ENCODE measurements at regions of chr9 and their contacts with region 1.

Region 1: DNA sequence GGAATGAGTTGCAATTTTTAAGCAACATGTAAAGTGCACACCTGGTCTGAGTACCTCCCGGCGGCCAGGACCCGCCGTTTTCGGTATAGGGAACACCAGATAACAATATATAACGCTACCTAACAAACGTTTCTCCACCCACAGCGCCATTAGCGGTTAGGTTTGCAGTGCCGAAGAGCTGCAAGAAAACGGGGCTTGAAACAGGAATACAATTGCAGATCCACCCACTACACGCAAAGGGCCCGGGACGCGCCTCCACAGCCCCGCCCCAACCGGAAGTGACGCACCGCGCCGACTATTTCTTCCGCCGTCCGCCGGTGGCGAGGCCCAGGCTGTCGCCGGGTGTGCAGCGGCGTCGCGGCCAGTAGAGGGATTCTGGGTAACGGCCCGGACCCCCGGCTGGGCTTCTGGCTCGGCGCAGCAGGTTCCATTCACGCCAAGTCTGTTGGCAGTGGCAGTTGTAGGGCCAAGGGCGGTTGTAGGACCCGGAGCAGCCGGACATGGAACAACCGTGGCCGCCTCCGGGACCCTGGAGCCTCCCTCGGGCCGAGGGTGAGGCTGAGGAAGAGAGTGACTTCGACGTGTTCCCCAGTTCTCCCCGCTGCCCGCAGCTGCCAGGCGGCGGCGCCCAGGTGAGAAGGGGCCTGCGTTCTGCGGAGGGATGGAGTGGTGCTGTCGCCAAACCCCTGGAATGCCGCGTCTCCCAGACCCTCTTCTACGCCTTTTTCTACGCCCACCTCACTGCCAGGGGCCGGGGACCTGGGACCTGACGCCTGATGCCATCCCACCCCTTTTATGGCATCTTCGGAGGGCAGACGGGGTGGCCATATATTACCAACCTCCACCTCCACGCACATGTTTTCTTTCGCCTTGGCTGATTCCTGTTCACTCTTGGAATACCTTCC is at the start of gene CDC37L1:
- DNase-seq: peak; percentile 98 to 100 (median 99)
- ATAC-seq: peak; percentile 98
- H3K4me3 ChIP-seq: peak within 1 kb of the TSS; percentile 72
- H3K4me3 Mint-ChIP-seq: no peak within 1 kb of the TSS
- H3K27ac ChIP-seq: peak within 1 kb of the TSS; percentile 95
- H3K27ac Mint-ChIP-seq: no peak within 1 kb of the TSS
- H3K4me1 ChIP-seq: peaks cover 15 to 19% of the 10 kb centered on the region in 2 donors
- H3K4me1 Mint-ChIP-seq: peaks cover 9 to 19% (median 17%) of the 10 kb centered on the region in 7 donors
- H3K27me3 ChIP-seq: no peaks in the 10 kb centered on the region
- H3K27me3 Mint-ChIP-seq: no peaks in the 10 kb centered on the region
- total RNA-seq, gene CDC37L1: 13.4 to 28.0 (median 22.9) TPM

Region 2: GRCh38 chr9:2849941-2850340 is 1829.6 kb before region 1 on chr9:
- CTCF ChIA-PET with region 1: no interaction called
- POLR2A ChIA-PET with region 1: no interaction called
- intact Hi-C with region 1: loop called in 1 of 2 experiments (anchors 2 kb)
- DNase-seq: peak in 3 of 9 donors; percentile 22 to 34 (median 29)
- ATAC-seq: peak; percentile 79
- H3K4me3 ChIP-seq: no peak overlapping the region
- H3K4me3 Mint-ChIP-seq: no peak overlapping the region
- H3K27ac ChIP-seq: no peak overlapping the region
- H3K27ac Mint-ChIP-seq: peak overlapping the region in 4 of 9 donors; percentile 17 to 82 (median 42)
- H3K4me1 ChIP-seq: peaks cover 5% of the 10 kb centered on the region in 2 donors
- H3K4me1 Mint-ChIP-seq: peaks cover 5 to 16% (median 9%) of the 10 kb centered on the region in 7 donors
- H3K27me3 ChIP-seq: no peaks in the 10 kb centered on the region
- H3K27me3 Mint-ChIP-seq: peaks cover 1 to 17% (median 13%) of the 10 kb centered on the region in 5 donors

Region 3: GRCh38 chr9:4443439-4443838 is 236.1 kb before region 1 on chr9:
- CTCF ChIA-PET with region 1: no interaction called
- POLR2A ChIA-PET with region 1: no interaction called
- intact Hi-C with region 1: no loop called
- DNase-seq: peak in 1 of 9 donors; percentile 18
- ATAC-seq: no peak
- H3K4me3 ChIP-seq: no peak overlapping the region
- H3K4me3 Mint-ChIP-seq: no peak overlapping the region
- H3K27ac ChIP-seq: no peak overlapping the region
- H3K27ac Mint-ChIP-seq: peak overlapping the region in 2 of 9 donors; percentile 3 to 22
- H3K4me1 ChIP-seq: no peaks in the 10 kb centered on the region
- H3K4me1 Mint-ChIP-seq: peaks cover 0 to 16% (median 11%) of the 10 kb centered on the region in 7 donors
- H3K27me3 ChIP-seq: no peaks in the 10 kb centered on the region
- H3K27me3 Mint-ChIP-seq: peaks cover 0 to 20% (median 7%) of the 10 kb centered on the region in 5 donors

Region 4: GRCh38 chr9:4604678-4605095 is 74.8 kb before region 1 on chr9:
- CTCF ChIA-PET with region 1: no interaction called
- POLR2A ChIA-PET with region 1: interaction called, 4 read pairs
- intact Hi-C with region 1: loop called in 1 of 2 experiments (anchors 2 kb)
- DNase-seq: peak in 8 of 9 donors; percentile 38 to 77 (median 60)
- ATAC-seq: peak; percentile 88
- H3K4me3 ChIP-seq: peak overlapping the region; percentile 18
- H3K4me3 Mint-ChIP-seq: peak overlapping the region in 3 of 10 donors; percentile 40 to 53 (median 50)
- H3K27ac ChIP-seq: no peak overlapping the region
- H3K27ac Mint-ChIP-seq: peak overlapping the region in 6 of 9 donors; percentile 17 to 85 (median 82)
- H3K4me1 ChIP-seq: peaks cover 16 to 29% of the 10 kb centered on the region in 2 donors
- H3K4me1 Mint-ChIP-seq: peaks cover 12 to 52% (median 32%) of the 10 kb centered on the region in 7 donors
- H3K27me3 ChIP-seq: no peaks in the 10 kb centered on the region
- H3K27me3 Mint-ChIP-seq: no peaks in the 10 kb centered on the region

Region 5: GRCh38 chr9:4667681-4668080 is 11.8 kb before region 1 on chr9:
- CTCF ChIA-PET with region 1: interaction called, 6 read pairs
- POLR2A ChIA-PET with region 1: interaction called, 120 read pairs
- intact Hi-C with region 1: loop called (anchors 1 kb)
- DNase-seq: peak in 7 of 9 donors; percentile 51 to 80 (median 73)
- ATAC-seq: peak; percentile 72
- H3K4me3 ChIP-seq: no peak overlapping the region
- H3K4me3 Mint-ChIP-seq: peak overlapping the region in 8 of 10 donors; percentile 33 to 98 (median 76)
- H3K27ac ChIP-seq: peak overlapping the region; percentile 35
- H3K27ac Mint-ChIP-seq: peak overlapping the region in 8 of 9 donors; percentile 84 to 96 (median 94)
- H3K4me1 ChIP-seq: peaks cover 17 to 53% of the 10 kb centered on the region in 2 donors
- H3K4me1 Mint-ChIP-seq: peaks cover 45 to 77% (median 68%) of the 10 kb centered on the region in 7 donors
- H3K27me3 ChIP-seq: no peaks in the 10 kb centered on the region
- H3K27me3 Mint-ChIP-seq: peaks cover 0 to 3% (median 0%) of the 10 kb centered on the region in 5 donors

Region 6: GRCh38 chr9:4750023-4750673 is 70.6 kb after region 1 on chr9:
- CTCF ChIA-PET with region 1: no interaction called
- POLR2A ChIA-PET with region 1: no interaction called
- intact Hi-C with region 1: loop called in 1 of 2 experiments (anchors 2 kb)
- DNase-seq: peak in 5 of 9 donors; percentile 28 to 40 (median 33)
- ATAC-seq: peak; percentile 73
- H3K4me3 ChIP-seq: no peak overlapping the region
- H3K4me3 Mint-ChIP-seq: no peak overlapping the region
- H3K27ac ChIP-seq: no peak overlapping the region
- H3K27ac Mint-ChIP-seq: no peak overlapping the region
- H3K4me1 ChIP-seq: no peaks in the 10 kb centered on the region
- H3K4me1 Mint-ChIP-seq: peaks cover 0 to 7% (median 4%) of the 10 kb centered on the region in 7 donors
- H3K27me3 ChIP-seq: no peaks in the 10 kb centered on the region
- H3K27me3 Mint-ChIP-seq: peaks cover 0 to 12% (median 0%) of the 10 kb centered on the region in 5 donors

Region 7: GRCh38 chr9:5437254-5438216 is 758.0 kb after region 1 on chr9 and contains the start of gene PLGRKT:
- CTCF ChIA-PET with region 1: no interaction called
- POLR2A ChIA-PET with region 1: no interaction called
- intact Hi-C with region 1: loop called in 1 of 2 experiments (anchors 1 kb)
- DNase-seq: peak; percentile 77 to 91 (median 89)
- ATAC-seq: peak; percentile 96
- H3K4me3 ChIP-seq: peak within 1 kb of the TSS; percentile 84
- H3K4me3 Mint-ChIP-seq: peak within 1 kb of the TSS; percentile 86 to 98 (median 96)
- H3K27ac ChIP-seq: peak within 1 kb of the TSS; percentile 81
- H3K27ac Mint-ChIP-seq: peak within 1 kb of the TSS; percentile 90 to 100 (median 98)
- H3K4me1 ChIP-seq: peaks cover 18 to 19% of the 10 kb centered on the region in 2 donors
- H3K4me1 Mint-ChIP-seq: peaks cover 7 to 50% (median 36%) of the 10 kb centered on the region in 7 donors
- H3K27me3 ChIP-seq: no peaks in the 10 kb centered on the region
- H3K27me3 Mint-ChIP-seq: no peaks in the 10 kb centered on the region
- total RNA-seq, gene PLGRKT: 15.8 to 31.7 (median 16.8) TPM